GM13977 (cell line): ENCODE measurements at regions of chr13 and their contacts with region 1.

Region 1: GRCh38 chr13:50911937-50912795 is 2.6 kb downstream of the RNASEH2B start:
- DNase-seq: peak; percentile 82
- CTCF ChIP-seq: peak; percentile 88

Region 2: GRCh38 chr13:49976314-49977258 is 935.6 kb before region 1 on chr13:
- in situ Hi-C with region 1: loop called (anchors 10 kb)
- DNase-seq: peak; percentile 75
- CTCF ChIP-seq: peak; percentile 78

Region 3: DNA sequence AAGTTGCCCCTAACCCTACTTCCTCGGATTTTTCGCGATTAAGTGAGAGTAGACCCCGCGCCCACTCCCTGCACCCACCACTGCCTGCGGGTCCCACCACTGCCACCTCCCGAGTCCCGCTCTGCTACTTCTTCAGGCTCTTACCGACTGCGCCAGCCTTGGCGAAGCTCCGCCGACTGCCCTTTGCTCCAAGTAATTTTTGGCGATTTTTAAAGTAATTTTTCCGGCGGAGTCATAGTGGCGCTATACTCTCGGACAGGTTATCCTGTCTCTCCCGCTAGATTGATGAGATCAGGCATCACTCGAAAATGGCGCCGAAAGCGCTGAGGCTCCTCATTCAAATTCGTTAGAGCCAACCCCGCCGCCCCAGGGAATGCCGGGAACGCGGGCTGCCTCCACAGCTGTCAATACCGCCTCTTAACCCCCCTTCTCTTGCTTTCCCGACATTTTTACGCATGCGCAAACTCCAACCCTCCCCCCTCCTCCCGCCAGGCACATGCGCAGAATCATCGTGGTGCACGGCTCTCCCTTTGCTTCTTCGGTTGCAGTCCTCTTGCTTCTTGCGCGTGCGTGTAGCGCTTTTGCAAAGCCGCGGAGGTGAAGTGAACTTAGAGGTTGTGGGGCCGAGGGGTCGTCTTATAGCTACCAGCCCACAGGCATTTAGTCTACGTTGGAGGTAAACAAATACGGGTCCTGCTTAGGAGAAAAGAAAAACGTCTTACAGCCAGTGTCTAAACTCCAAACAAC is 830.3 kb before region 1 on chr13:
- in situ Hi-C with region 1: loop called (anchors 25 kb)
- DNase-seq: peak; percentile 93
- CTCF ChIP-seq: no peak

Region 4: DNA sequence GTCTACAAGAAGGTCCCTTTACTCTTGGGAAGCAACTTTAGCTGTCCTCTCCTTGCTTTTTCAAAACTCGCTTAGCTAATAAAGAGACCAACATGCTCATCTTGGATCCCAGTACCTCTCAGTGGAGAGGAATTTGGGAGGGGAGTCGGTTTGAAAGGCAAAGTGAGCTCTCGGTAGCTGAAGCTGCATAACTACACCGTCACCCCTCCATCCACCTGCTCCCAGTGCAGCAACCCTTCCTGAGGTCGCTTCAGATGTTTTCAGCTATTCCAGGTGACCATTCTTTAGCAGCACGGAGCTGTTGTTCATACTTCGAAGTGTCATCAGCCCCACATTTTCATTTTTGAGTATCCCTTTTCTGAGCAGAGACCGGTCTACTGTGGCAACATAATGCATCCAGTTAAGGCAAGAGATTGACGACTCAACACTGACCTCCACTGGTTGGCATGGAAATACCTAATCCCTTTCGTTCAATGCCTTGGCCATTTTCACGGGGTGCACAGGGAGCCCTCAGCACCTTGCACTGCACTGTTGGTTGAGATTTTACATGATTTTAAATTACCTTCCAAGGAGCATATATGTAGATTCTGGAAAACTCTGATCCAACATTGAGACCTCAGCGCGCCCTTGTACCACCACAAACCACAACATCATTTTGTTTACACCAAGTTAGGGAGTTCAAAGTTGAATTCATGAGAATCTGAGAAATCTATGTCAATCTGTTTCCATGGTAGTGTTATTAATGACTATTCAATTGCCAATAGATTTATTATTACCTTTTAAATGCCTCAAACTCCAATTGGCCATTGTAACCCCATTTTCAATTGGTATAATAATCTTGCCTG is 110.9 kb before region 1 on chr13:
- in situ Hi-C with region 1: loop called (anchors 10 kb)
- DNase-seq: peak; percentile 38
- CTCF ChIP-seq: peak; percentile 83